Activated CD4-positive, alpha-beta T cell treated with anti-CD3 and anti-CD28 coated beads, Interleukin-2, amount 10 ng/mL, durations not matched to agents 7 days and 5 days (primary cell): ENCODE measurements at regions of chr17 and their contacts with region 1.

Region 1: DNA sequence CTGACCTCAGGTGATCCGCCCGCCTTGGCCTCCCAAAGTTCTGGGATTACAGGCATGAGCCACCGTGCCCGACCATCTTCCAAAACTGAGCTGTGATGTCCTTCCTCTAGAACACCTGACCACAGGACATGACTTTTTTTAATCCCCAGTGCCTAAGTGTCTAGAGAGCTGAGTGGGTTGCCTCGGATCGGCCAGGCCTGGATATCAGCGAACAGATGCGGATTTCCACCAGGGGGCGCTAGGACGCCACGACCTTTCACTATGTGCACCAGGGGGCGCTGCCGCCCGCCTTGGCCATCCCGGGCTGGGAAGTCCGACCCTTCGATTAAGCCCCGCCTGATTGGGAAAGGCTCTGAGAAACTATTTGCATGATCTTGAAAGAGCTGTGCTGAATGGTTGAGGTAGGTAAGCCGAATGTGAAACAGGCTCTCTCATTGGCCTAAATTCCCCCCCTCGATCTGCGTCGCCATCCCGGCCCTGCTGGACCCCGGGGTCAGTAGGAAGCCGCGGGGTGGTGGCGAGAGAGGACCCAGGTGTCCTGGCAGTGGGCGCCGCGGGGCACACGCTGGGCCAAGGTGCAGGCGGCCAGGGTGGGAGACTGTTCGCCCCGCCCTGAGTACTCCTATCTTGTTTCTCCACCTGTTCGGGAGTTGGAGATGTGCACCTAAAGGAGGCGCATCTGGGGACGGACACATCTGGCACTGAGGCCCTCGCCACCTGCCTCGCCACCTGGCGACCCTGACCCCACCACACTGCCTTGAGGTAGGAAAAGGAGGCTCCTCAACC is at the start of gene ACBD4:
- DNase-seq: peak; percentile 98
- H3K4me3 Mint-ChIP-seq: peak within 1 kb of the TSS; percentile 91
- H3K27ac Mint-ChIP-seq: peak within 1 kb of the TSS; percentile 86
- H3K4me1 Mint-ChIP-seq: peaks cover 17% of the 10 kb centered on the region
- H3K27me3 Mint-ChIP-seq: peaks cover 6% of the 10 kb centered on the region
- total RNA-seq, gene ACBD4: 18.4 to 19.7 TPM

Region 2: DNA sequence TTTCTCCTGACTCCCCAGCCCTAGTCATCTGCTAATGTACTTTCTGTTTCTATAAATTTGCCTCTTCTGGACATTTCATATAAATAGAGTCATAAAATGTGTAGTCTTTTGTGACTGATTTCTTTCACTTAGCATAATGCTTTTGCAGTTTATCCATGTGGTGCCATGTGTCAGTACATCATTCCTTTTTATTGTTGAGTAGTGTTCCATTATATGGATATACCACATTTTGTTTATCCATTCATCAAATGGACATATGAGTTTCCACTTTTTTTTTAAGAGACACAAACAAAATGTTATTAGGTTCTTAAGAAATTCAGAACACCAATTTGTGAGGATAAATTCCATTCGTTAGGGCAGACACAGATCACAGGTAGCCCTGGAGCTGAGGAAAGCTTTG is 415.9 kb before region 1 on chr17:
- CTCF ChIA-PET with region 1: no interaction called
- POLR2A ChIA-PET with region 1: no interaction called
- DNase-seq: no peak
- H3K4me3 Mint-ChIP-seq: no peak overlapping the region
- H3K27ac Mint-ChIP-seq: no peak overlapping the region
- H3K4me1 Mint-ChIP-seq: no peaks in the 10 kb centered on the region
- H3K27me3 Mint-ChIP-seq: no peaks in the 10 kb centered on the region

Region 3: DNA sequence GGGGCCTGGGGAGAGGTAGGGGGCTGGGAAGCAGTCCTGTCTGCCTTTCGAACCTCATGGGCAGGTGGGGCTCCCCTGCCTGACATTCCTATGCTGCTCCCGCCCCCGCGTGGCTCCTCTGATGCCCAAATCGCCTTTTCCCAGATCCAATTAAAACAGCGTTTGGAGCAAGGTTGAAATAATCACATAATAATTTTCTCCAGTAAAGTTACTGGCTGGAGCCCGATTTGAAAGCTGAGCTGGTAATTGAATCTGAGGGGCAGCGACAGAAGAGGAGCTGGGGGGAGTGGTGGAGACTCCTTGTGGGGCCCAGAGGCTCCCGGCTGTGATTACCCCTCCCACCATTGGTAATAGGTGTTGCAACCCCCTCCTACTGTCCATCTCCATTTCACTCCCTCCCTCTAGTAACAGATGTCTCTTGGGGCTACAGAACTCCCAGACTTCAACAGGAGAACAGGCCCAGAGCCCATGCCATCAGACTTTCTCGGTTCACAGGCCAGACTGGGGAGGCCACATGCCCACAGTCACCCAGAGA is 128.4 kb before region 1 on chr17:
- CTCF ChIA-PET with region 1: no interaction called
- POLR2A ChIA-PET with region 1: no interaction called
- DNase-seq: no peak
- H3K4me3 Mint-ChIP-seq: no peak overlapping the region
- H3K27ac Mint-ChIP-seq: no peak overlapping the region
- H3K4me1 Mint-ChIP-seq: no peaks in the 10 kb centered on the region
- H3K27me3 Mint-ChIP-seq: peaks cover 18% of the 10 kb centered on the region

Region 4: DNA sequence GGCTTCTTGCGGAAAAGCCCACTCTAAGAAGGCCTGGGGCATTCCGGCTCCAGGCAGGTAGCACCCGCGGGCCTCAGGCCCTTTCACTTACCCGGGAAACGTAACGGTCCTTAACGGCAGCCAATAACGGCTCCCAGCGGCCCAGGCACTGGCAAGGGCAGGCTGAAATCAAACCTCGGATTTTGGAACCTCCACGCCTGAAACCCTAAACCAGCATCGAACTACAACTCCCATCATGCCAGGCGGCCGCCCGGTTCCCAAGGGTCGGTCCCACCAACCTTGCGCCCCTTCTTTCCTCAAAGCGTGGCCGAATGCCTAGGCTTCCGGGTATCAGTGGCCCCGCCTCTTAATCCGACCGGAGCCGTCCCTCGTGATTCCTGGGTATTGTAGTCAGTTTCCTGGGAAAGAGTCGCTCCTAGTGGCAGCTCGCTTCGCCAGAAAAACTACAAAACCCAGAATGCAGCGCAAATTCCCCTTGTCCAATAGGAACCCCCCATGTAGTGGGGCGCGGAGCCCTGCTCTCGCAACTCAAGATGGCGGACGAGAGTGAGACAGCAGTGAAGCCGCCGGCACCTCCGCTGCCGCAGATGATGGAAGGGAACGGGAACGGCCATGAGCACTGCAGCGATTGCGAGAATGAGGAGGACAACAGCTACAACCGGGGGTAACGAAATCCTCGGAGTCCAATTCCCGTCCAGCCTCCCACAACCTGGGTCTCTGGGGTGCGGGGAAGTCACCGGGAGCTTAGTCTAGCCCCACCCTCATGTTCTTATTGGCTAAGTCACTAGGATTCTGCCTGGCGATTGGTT is 74.4 kb before region 1 on chr17 and contains the start of gene NMT1:
- CTCF ChIA-PET with region 1: interaction called, 26 read pairs
- POLR2A ChIA-PET with region 1: no interaction called
- DNase-seq: peak; percentile 98
- H3K4me3 Mint-ChIP-seq: peak within 1 kb of the TSS; percentile 100
- H3K27ac Mint-ChIP-seq: peak within 1 kb of the TSS; percentile 100
- H3K4me1 Mint-ChIP-seq: peaks cover 40% of the 10 kb centered on the region
- H3K27me3 Mint-ChIP-seq: no peaks in the 10 kb centered on the region
- total RNA-seq, gene NMT1: 118 to 138 TPM

Region 5: GRCh38 chr17:45116725-45117016 is 18.7 kb before region 1 on chr17:
- CTCF ChIA-PET with region 1: interaction called, 33 read pairs
- POLR2A ChIA-PET with region 1: no interaction called
- DNase-seq: no peak
- H3K4me3 Mint-ChIP-seq: no peak overlapping the region
- H3K27ac Mint-ChIP-seq: no peak overlapping the region
- H3K4me1 Mint-ChIP-seq: no peaks in the 10 kb centered on the region
- H3K27me3 Mint-ChIP-seq: peaks cover 3% of the 10 kb centered on the region

Region 6: DNA sequence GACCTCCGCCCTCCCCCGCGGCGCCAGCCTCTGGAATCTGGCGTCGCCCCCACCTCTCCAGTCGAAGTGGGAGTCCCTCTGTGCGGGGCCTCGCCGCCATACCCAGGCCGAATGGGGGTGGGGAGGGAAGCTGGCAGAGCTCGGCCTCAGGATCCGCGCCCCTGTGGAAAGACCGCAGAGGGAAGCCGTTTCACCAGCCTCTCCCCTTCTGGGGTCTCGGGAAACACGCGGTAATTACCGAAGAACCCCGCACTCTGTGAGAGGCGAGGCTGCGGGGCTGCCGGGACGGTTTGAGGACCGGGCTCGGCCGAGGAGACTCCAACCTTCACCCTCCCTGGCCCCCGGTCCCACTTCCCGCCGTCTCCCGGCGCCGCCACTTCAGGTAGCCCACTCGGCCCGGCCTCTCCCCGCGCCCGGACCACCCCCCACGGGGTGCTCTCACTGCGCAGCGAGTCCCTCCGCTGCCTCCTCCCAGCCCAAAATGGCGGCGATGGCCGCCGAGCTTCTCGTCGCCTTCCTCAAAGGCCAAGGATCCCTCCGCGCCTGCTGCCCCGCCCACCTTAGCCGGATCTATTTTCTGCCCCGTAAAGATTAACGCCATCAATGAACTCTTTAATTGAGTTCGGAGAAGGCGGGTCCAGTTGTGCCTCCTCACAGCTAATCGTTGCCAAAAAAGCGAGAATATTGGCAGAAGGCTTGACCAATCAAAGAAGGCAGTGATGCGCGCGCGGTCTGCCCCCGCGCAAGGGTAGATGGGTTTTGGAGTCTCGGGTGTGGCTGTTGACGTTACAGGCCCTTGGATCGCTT is 25.8 kb after region 1 on chr17:
- CTCF ChIA-PET with region 1: interaction called, 203 read pairs
- POLR2A ChIA-PET with region 1: no interaction called
- DNase-seq: peak; percentile 98
- H3K4me3 Mint-ChIP-seq: peak overlapping the region; percentile 99
- H3K27ac Mint-ChIP-seq: peak overlapping the region; percentile 96
- H3K4me1 Mint-ChIP-seq: peaks cover 41% of the 10 kb centered on the region
- H3K27me3 Mint-ChIP-seq: no peaks in the 10 kb centered on the region

Region 7: GRCh38 chr17:45197555-45198334 is 62.4 kb after region 1 on chr17:
- CTCF ChIA-PET with region 1: interaction called, 105 read pairs
- POLR2A ChIA-PET with region 1: no interaction called
- DNase-seq: peak; percentile 88
- H3K4me3 Mint-ChIP-seq: no peak overlapping the region
- H3K27ac Mint-ChIP-seq: peak overlapping the region; percentile 57
- H3K4me1 Mint-ChIP-seq: peaks cover 6% of the 10 kb centered on the region
- H3K27me3 Mint-ChIP-seq: no peaks in the 10 kb centered on the region

Region 8: GRCh38 chr17:45235416-45236281 is 100.3 kb after region 1 on chr17:
- CTCF ChIA-PET with region 1: interaction called, 44 read pairs
- POLR2A ChIA-PET with region 1: no interaction called
- DNase-seq: peak; percentile 84
- H3K4me3 Mint-ChIP-seq: no peak overlapping the region
- H3K27ac Mint-ChIP-seq: peak overlapping the region; percentile 83
- H3K4me1 Mint-ChIP-seq: peaks cover 62% of the 10 kb centered on the region
- H3K27me3 Mint-ChIP-seq: no peaks in the 10 kb centered on the region

Region 9: DNA sequence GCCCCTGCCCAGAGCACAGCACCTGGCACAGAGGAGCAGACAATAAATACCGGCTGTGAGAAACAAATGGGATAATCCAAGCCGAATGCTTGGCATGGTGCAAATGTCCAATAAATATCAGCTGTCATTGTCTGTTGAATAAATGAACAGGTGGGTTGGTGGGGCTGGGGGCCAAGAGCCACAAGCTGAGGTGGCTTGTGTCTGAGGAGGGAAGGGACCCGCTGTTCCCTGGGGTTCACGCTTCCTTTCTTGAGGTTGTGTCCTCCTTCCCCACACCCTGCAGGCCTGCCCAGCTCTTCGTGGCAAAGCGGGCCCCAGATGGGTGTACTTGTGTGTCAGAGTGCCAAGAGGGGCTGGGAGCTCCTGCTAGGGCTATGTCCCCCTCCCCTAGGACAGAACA is 258.7 kb after region 1 on chr17:
- CTCF ChIA-PET with region 1: interaction called, 11 read pairs
- POLR2A ChIA-PET with region 1: no interaction called
- DNase-seq: no peak
- H3K4me3 Mint-ChIP-seq: no peak overlapping the region
- H3K27ac Mint-ChIP-seq: no peak overlapping the region
- H3K4me1 Mint-ChIP-seq: peaks cover 4% of the 10 kb centered on the region
- H3K27me3 Mint-ChIP-seq: no peaks in the 10 kb centered on the region